ENCODE measurements at regions of chr1 and their contacts with region 1.

Region 1: GRCh38 chr1:100009458-100009857 is 39.7 kb downstream of the SLC35A3 start:
- DNase-seq: no peak
- H3K4me3 ChIP-seq: no peak overlapping the region
- H3K27ac ChIP-seq: no peak overlapping the region
- H3K4me1 ChIP-seq: no peaks in the 10 kb centered on the region
- H3K27me3 ChIP-seq: no peaks in the 10 kb centered on the region
- CTCF ChIP-seq: no peak
- POLR2A ChIP-seq: no peak

Region 2: GRCh38 chr1:99691175-99691574 is 318.3 kb before region 1 on chr1:
- intact Hi-C with region 1: loop called (anchors 5 kb)
- DNase-seq: no peak
- H3K4me3 ChIP-seq: no peak overlapping the region
- H3K27ac ChIP-seq: peak overlapping the region in 1 of 2 donors; percentile 32
- H3K4me1 ChIP-seq: no peaks in the 10 kb centered on the region
- H3K27me3 ChIP-seq: no peaks in the 10 kb centered on the region
- CTCF ChIP-seq: no peak
- POLR2A ChIP-seq: no peak

Region 3: GRCh38 chr1:101044749-101045148 is 1035.3 kb after region 1 on chr1:
- intact Hi-C with region 1: loop called (anchors 5 kb)
- DNase-seq: no peak
- H3K4me3 ChIP-seq: no peak overlapping the region
- H3K27ac ChIP-seq: no peak overlapping the region
- H3K4me1 ChIP-seq: no peaks in the 10 kb centered on the region
- H3K27me3 ChIP-seq: no peaks in the 10 kb centered on the region
- CTCF ChIP-seq: no peak
- POLR2A ChIP-seq: no peak